Calu3 (cell line): ENCODE measurements at regions of chr14 and their contacts with region 1.

Region 1: GRCh38 chr14:51283402-51284085 is 43.5 kb downstream of the TMX1 start:
- DNase-seq: peak; percentile 26
- H3K4me3 Mint-ChIP-seq: no peak overlapping the region
- H3K27ac Mint-ChIP-seq: no peak overlapping the region
- H3K4me1 Mint-ChIP-seq: no peaks in the 10 kb centered on the region
- H3K27me3 Mint-ChIP-seq: no peaks in the 10 kb centered on the region
- CTCF ChIP-seq: peak; percentile 57

Region 2: DNA sequence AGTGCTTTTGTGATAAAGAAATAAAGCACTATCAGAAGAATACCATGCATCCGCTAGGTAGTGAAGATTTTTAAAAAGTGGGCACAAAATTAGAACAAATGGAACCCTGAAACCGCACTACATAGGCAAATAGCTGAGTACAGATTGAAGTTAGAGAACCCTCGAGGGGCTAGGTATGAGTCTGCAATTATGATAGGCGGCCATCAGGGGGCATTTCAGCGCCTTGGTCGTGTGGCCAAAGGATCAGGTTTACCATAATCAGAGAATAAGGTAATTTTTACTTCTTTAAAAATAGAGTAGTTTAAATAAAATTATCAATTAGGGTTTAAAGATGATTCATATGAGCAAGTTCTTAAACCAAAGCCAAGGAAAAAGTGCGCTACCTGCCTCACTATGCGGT is 86.3 kb after region 1 on chr14:
- CTCF ChIA-PET with region 1: no interaction called
- intact Hi-C with region 1: loop called (anchors 5 kb)
- DNase-seq: peak; percentile 43
- H3K4me3 Mint-ChIP-seq: no peak overlapping the region
- H3K27ac Mint-ChIP-seq: no peak overlapping the region
- H3K4me1 Mint-ChIP-seq: peaks cover 8% of the 10 kb centered on the region
- H3K27me3 Mint-ChIP-seq: no peaks in the 10 kb centered on the region
- CTCF ChIP-seq: peak; percentile 35

Region 3: DNA sequence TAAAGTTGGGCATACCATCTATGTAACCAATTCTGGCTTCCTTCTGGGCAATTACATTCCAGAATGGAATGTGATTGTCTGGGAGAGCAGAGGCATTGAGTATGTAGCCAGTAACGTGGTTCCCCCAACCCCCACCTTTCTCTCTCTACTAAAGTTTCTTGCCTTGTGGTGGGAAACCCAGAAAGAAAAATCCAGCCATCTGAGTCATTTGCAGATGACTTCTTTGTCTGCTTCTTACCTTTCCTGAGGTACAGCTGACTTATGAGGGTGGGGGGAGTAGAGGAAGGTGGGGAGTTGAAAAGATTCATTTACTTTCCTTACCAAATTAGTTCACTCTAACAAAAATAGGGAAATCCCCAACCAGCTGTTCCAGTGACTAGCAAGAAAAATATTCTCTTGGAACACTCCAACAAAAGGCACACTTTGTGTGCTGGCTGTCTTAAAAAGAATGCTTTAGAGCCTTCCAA is 256.1 kb after region 1 on chr14:
- CTCF ChIA-PET with region 1: no interaction called
- intact Hi-C with region 1: loop called (anchors 10 kb)
- DNase-seq: peak; percentile 62
- H3K4me3 Mint-ChIP-seq: no peak overlapping the region
- H3K27ac Mint-ChIP-seq: peak overlapping the region; percentile 73
- H3K4me1 Mint-ChIP-seq: peaks cover 53% of the 10 kb centered on the region
- H3K27me3 Mint-ChIP-seq: no peaks in the 10 kb centered on the region
- CTCF ChIP-seq: no peak

Region 4: DNA sequence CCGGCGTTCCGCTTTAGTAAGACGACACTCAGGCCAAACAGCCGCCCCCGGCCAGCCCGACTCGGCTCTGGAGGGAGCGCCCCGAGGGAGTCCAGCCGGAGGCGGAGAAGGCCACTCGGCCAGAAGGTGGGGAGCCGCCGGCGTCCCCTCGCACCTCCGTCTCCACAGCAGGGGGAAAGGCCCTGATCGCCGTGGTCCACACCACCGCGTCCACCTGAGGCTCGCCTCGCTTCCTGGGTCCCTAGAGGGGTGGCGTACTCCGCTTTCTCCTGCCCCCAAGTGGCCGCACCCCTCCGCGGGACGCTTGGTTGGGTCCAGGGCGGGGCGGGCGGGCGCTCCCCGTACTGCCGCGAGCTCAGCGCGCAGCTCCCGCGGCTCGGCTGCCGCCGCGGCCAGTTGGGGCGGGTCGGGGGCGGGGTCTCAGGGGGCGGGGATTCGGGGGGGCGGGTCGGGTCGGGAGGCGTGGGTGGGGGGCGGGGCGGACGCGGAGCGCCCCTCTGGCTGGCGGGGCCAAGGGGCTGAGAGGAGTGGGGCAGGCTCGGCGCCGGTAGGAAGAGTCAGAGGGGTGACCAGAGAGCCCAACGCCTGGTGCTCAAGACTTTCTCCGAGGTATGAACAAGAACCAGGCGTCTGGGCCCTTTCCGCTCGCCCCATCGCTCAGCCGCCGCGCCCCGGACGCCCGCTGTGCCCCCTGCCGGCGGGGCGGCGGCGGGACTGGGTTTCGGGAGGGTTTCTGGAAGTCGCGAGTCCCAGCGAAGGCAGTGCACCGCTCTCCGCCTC is 368.0 kb after region 1 on chr14 and contains the start of gene FRMD6:
- CTCF ChIA-PET with region 1: interaction called, 15 read pairs
- intact Hi-C with region 1: loop called (anchors 2 kb)
- DNase-seq: peak; percentile 84
- H3K4me3 Mint-ChIP-seq: peak within 1 kb of the TSS; percentile 80
- H3K27ac Mint-ChIP-seq: peak within 1 kb of the TSS; percentile 58
- H3K4me1 Mint-ChIP-seq: peaks cover 17% of the 10 kb centered on the region
- H3K27me3 Mint-ChIP-seq: no peaks in the 10 kb centered on the region
- CTCF ChIP-seq: peak; percentile 55
- total RNA-seq, gene FRMD6: 17.0 and 33.3 TPM in 2 replicates

Region 5: DNA sequence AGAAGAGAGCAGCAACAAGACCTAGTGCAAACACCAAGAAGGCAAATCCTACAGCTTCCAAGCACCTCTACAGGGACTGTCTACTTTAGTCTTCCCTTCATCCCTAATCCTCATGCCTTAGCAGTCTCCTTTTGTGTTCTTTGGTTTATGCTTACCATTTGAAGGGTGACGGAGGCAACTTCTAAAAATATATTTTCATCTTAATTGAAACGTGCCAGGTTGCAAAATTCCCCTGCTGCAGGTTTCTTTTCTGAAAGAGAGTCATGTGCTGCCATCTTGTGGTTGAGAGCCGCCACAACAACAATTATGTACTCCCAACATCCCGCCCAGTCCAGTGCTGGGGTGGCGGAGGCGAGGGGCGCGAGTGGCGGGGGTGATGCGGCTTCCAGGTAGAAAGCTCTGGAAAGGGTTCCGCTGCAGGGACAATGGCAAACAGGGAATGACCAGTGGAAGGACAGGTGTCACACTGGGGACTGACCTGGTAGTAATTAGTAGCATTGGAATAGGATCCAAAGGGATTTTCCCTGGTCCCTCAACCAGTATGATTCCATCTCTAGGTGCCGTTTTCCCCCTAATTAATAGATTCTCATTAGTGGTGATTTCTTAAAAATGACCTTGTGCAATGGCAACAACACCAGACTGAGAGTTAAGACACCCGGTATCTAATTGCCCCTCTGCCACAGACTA is 496.6 kb after region 1 on chr14:
- CTCF ChIA-PET with region 1: interaction called, 15 read pairs
- intact Hi-C with region 1: loop called (anchors 1 kb)
- DNase-seq: peak; percentile 67
- H3K4me3 Mint-ChIP-seq: peak overlapping the region; percentile 35
- H3K27ac Mint-ChIP-seq: no peak overlapping the region
- H3K4me1 Mint-ChIP-seq: peaks cover 19% of the 10 kb centered on the region
- H3K27me3 Mint-ChIP-seq: peaks cover 10% of the 10 kb centered on the region
- CTCF ChIP-seq: peak; percentile 75

Region 6: DNA sequence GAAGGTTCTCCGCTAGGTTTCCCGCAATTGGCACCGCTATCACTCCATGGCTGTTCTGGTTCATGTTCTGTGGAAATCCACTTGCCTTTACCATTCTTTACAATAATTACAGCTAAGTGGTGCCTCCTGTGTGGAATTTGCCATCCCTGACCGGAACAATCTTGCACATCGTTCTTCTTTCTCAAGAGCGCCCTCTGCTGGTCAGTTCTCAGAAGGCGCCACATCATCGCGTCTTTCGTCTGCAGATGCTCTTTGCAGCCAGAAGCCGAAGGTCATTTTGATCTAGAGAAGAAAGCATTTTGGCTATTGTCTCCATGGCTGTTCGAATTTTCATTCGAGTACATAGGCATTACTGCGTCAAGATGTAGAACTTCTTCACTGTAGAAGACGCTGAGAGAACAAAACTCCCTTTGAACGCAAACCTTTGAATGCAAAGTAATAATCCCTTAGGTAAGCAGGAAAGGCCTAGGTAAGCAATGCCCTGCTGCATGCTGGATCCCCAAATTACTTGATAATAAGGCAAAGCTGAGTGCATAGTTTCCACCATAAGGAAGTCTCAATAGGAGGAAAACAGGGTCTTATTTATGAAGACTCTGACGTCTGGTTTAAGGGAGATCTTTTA is 695.7 kb after region 1 on chr14:
- CTCF ChIA-PET with region 1: no interaction called
- intact Hi-C with region 1: loop called (anchors 2 kb)
- DNase-seq: peak; percentile 80
- H3K4me3 Mint-ChIP-seq: no peak overlapping the region
- H3K27ac Mint-ChIP-seq: no peak overlapping the region
- H3K4me1 Mint-ChIP-seq: no peaks in the 10 kb centered on the region
- H3K27me3 Mint-ChIP-seq: peaks cover 58% of the 10 kb centered on the region
- CTCF ChIP-seq: peak; percentile 82

Region 7: GRCh38 chr14:52131640-52132320 is 848.2 kb after region 1 on chr14:
- CTCF ChIA-PET with region 1: no interaction called
- intact Hi-C with region 1: loop called (anchors 5 kb)
- DNase-seq: peak; percentile 84
- H3K4me3 Mint-ChIP-seq: no peak overlapping the region
- H3K27ac Mint-ChIP-seq: no peak overlapping the region
- H3K4me1 Mint-ChIP-seq: no peaks in the 10 kb centered on the region
- H3K27me3 Mint-ChIP-seq: peaks cover 26% of the 10 kb centered on the region
- CTCF ChIP-seq: peak; percentile 46